Activated naive CD4-positive, alpha-beta T cell treated with anti-CD3 and anti-CD28 coated beads, Interleukin-2, amount 10 ng/mL, durations not matched to agents 7 days and 5 days (primary cell): ENCODE measurements at regions of chr4 and their contacts with region 1.

Region 1: DNA sequence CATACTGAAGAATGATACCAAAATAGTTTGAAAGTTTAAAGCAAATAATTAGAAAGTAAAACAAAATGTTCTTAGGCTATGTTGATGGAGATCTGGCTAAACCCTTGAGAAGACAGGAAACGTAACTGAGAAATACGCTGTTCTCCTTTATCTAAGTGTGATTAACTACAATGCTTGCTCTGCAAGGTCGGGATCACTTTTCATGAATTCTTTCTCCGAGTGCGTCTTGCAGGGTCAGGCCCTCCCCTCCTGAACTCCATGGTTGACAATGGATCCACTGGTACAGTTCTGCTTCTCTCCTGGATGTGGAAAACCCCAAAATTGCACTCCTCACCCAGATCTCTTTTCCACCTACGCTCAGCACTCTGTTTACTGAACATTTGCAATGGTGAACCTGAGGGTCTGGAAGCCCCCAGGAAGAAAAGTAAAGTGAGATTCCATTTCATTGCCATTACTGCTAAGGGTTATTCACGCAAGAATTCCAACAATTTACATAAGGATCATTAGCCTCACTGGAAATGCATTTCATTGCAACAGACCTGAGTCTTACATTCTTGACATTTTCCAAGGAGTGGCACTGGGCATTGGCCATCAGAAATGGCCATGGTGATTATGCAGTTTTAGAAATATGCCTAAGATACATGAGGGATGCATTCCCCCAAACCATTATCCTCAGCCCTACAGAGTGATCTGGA is 24.6 kb upstream of the WWC2 start:
- DNase-seq: no peak
- H3K4me3 Mint-ChIP-seq: no peak overlapping the region
- H3K27ac Mint-ChIP-seq: no peak overlapping the region
- H3K4me1 Mint-ChIP-seq: no peaks in the 10 kb centered on the region
- H3K27me3 Mint-ChIP-seq: peaks cover 15% of the 10 kb centered on the region

Region 2: GRCh38 chr4:182835006-182835740 is 239.3 kb before region 1 on chr4:
- CTCF ChIA-PET with region 1: no interaction called
- DNase-seq: no peak
- H3K4me3 Mint-ChIP-seq: no peak overlapping the region
- H3K27ac Mint-ChIP-seq: no peak overlapping the region
- H3K4me1 Mint-ChIP-seq: no peaks in the 10 kb centered on the region
- H3K27me3 Mint-ChIP-seq: peaks cover 16% of the 10 kb centered on the region

Region 3: DNA sequence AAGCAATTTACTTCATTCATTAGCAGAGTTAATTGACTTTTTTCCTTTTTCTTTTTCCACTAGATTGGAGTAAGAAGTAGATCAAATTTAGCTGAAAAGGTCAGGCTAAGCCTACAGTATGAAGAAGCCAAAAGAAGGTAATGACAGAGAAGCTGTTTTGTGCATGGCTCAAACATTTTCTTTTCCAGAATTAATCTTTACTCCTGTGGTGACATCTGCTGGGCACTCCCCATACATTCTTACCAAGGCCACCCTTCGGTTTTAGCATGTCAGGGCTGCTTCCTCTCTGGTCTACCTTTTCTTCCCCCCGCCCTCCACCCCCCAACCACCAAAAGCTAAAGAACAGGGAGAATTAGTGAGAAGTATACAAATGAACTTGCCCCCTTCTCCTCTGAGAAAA is 175.4 kb after region 1 on chr4:
- CTCF ChIA-PET with region 1: interaction called, 111 read pairs
- DNase-seq: peak; percentile 34
- H3K4me3 Mint-ChIP-seq: no peak overlapping the region
- H3K27ac Mint-ChIP-seq: no peak overlapping the region
- H3K4me1 Mint-ChIP-seq: no peaks in the 10 kb centered on the region
- H3K27me3 Mint-ChIP-seq: no peaks in the 10 kb centered on the region

Region 4: DNA sequence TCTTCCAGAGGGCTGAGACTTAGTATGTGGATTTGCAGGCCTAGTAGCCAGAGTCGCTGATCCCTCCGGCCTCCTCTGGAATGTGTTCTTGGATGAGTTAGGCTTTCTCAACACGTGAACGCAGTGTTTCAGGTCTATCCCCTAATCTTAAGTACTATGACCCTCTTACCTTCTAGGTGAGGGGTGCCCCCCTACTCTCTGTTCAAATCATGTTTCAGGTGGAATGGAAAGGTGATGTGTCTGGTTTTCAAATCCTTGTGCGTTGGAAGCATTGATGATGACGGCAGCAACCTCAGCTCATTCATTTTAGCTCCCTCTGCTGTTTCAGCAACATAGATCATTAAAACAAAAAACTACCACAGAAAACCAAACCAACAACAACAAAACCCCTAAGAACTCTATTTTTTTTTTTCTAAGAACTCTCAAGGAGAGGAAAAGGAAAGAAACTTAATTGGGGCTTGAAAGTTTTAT is 528.1 kb after region 1 on chr4:
- CTCF ChIA-PET with region 1: no interaction called
- DNase-seq: peak; percentile 31
- H3K4me3 Mint-ChIP-seq: no peak overlapping the region
- H3K27ac Mint-ChIP-seq: no peak overlapping the region
- H3K4me1 Mint-ChIP-seq: no peaks in the 10 kb centered on the region
- H3K27me3 Mint-ChIP-seq: no peaks in the 10 kb centered on the region